Activated CD4-positive, alpha-beta T cell treated with anti-CD3 and anti-CD28 coated beads, Interleukin-2, amount 10 ng/mL, durations not matched to agents 24 days and 14 days (primary cell): ENCODE measurements at regions of chr6 and their contacts with region 1.

Region 1: DNA sequence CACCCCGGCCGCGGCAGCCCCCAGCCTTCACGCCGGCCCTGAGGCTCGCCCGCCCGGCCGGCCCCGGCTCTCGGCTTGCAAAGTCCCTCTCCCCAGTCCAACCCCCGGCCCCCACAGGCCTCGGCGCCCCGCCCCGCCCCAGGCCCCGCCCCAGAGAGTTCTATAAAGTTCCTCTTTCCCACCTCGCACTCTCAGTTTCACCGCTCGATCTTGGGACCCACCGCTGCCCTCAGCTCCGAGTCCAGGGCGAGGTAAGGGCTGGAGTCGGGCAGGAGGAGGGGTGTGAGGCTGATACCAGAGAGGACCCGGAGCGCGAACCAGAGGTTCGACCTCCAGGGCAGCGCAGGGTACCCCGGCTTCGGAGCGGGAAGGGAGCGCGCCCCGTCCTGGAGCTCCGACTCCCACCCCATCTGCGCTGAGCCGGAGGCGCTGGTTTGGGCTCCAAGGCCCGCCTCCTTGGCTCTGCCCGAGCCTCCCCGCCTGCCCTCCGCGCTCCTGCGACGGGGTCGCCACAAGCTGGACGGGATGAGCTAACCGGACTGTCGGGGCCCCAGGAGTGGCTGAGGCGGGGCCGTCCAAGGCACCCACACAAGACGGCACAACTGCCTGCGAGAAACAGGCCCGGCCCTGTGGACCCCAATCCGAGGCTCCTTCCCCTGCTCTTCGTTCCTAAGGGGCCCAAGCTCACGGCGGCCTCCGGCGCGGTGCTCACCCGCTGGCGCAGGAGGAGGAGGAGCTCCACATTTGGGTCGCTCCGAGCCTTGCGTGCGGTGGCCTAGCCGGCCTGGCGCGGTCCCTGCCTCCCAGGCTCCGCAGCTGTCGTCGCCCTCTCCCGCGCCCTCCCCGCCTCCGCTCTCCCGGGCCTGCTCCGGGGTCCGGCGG is at the start of gene IRF4:
- DNase-seq: peak; percentile 92
- H3K4me3 Mint-ChIP-seq: peak within 1 kb of the TSS; percentile 93
- H3K27ac Mint-ChIP-seq: peak within 1 kb of the TSS; percentile 98
- H3K4me1 Mint-ChIP-seq: peaks cover 40% of the 10 kb centered on the region
- H3K27me3 Mint-ChIP-seq: peaks cover 2% of the 10 kb centered on the region
- total RNA-seq, gene IRF4: 831 and 846 TPM in 2 replicates

Region 2: DNA sequence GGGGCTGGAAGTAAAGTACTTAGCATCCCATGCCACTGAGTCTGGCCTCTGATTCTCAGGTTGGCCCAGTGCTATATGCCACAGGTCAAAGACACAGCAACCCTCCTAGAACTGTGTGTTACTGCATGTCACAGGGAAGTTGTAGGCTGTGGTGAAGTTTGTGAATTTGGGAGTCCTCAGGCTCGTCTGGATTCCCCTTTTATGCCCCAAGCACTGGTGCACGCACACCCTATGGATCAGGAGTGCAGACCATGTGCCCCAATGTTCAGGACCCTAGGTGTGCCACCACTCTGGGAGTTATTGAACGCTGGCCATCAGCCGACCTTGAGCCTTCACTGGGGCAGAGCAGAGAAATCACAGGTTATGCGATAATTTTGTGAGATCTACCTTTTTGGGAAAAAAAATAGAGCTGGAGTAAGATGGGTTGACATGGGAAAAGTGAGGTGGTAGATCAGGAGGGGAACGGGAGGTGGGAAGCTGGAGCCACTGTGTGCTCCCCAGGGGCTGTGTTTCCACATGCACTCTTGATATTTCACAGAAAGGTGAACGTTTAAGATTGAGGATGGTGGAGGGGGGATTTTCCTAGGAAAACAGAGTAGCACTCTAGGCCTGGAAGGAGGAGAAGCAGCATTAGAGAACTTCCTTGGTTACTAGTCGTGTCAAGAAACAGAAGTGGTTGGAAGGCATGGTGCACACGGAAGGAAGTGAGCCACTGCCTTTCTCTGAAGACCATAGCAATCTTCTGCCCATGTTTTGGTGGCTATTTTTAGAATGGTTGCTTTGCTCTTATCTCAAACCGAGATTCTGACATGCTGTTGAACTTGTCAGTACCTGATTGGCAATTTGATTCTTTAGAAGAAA is 55.4 kb before region 1 on chr6:
- intact Hi-C with region 1: loop called (anchors 5 kb)
- DNase-seq: peak; percentile 71
- H3K4me3 Mint-ChIP-seq: peak overlapping the region; percentile 65
- H3K27ac Mint-ChIP-seq: peak overlapping the region; percentile 75
- H3K4me1 Mint-ChIP-seq: peaks cover 45% of the 10 kb centered on the region
- H3K27me3 Mint-ChIP-seq: no peaks in the 10 kb centered on the region

Region 3: DNA sequence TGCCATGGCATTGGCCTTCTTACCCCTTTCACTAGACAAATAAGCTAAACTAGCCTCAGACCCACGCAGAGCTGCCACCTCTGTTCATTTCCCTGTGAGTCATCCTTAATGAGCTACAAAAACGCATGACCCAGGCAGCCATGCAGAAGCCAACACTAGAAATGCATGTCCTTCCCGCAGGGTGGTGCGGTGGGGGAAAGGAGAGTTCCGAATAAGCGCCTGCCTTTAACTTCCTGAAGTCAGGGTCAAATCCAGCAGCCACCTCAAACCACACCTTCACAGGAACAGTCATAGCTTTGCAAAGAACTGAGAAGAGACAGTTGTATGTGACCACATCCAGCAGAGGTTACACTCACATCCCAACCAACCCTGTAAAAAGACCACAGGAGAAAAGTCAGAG is 40.2 kb after region 1 on chr6:
- intact Hi-C with region 1: loop called (anchors 5 kb)
- DNase-seq: peak; percentile 90
- H3K4me3 Mint-ChIP-seq: peak overlapping the region; percentile 14
- H3K27ac Mint-ChIP-seq: peak overlapping the region; percentile 67
- H3K4me1 Mint-ChIP-seq: peaks cover 72% of the 10 kb centered on the region
- H3K27me3 Mint-ChIP-seq: no peaks in the 10 kb centered on the region

Region 4: DNA sequence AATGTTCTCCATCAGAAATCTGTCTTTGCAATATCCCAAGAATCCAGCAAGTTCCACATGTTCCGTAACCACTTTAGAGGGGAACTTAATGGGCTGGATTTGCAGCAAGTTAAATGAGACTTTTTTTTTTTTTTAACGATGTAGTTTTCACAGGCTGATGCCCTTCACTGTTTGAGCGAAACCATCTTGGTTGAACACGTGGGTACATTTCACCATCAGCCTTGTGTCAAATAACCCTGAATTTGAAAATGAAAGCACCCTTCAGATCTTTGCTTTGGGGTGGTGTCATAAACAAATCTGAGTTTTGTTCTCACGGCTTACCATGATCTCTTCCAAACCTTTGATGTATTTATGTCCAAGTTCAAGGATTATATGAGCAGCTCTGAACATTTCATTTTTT is 374.8 kb after region 1 on chr6:
- intact Hi-C with region 1: no loop called
- DNase-seq: no peak
- H3K4me3 Mint-ChIP-seq: no peak overlapping the region
- H3K27ac Mint-ChIP-seq: no peak overlapping the region
- H3K4me1 Mint-ChIP-seq: peaks cover 3% of the 10 kb centered on the region
- H3K27me3 Mint-ChIP-seq: peaks cover 38% of the 10 kb centered on the region

Region 5: GRCh38 chr6:786946-787763 is 395.4 kb after region 1 on chr6:
- intact Hi-C with region 1: loop called (anchors 5 kb)
- DNase-seq: peak; percentile 68
- H3K4me3 Mint-ChIP-seq: no peak overlapping the region
- H3K27ac Mint-ChIP-seq: peak overlapping the region; percentile 81
- H3K4me1 Mint-ChIP-seq: peaks cover 16% of the 10 kb centered on the region
- H3K27me3 Mint-ChIP-seq: peaks cover 10% of the 10 kb centered on the region